HEK293T (cell line): ENCODE measurements at regions of chr20 and their contacts with region 1.

Region 1: DNA sequence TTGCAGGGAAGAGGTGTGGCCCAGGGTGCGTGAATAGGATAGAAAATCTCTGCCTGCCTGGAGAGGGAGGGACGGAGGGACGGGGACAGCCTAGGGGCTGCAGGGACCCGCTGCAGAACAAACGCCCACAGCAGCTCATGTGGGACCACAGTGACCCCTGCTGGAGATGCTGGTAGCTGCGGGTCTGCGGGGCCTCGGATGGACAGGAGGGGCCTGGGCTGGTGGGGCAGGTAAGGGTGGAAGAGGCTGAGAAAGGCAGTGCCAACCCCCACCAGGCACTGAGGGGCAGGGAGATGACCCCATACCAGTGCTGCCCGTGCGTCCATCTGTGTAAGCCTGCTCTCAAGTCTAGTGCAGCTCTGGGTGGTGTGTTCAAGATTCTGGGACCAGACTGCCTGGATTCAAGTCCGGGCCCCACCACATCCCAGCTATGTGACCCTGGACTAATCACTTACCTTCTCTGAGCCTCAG is 39.4 kb downstream of the KIAA1755 start:
- DNase-seq: peak; percentile 90

Region 2: DNA sequence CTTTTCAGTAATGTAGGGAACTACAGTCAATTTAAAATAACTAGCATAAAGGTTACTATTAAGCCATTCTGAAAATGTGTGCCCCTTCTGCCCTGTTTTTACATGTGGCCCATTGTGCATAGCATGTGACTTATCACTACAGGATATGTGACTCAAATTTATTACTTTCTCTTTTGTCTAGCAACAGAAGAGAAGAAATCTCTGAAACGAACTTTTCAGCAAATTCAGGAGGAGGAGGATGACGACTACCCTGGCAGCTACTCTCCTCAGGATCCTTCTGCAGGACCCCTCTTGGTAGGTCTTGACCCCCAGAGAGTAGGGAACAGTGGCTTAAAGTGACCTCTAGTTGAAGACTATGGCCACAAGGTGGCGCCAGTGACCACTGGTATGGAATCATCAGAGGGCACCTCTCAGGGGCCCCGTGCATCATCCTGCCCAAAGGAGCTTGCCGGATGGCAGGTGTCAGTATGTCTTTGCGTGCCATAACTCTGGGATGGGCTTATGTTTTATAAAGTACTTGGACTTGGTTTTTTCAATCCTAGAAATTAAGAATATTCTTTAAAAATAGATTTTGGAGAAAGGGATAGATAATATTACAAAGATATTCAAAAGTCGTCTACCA is 163.7 kb before region 1 on chr20:
- CTCF ChIA-PET with region 1: interaction called, 14 read pairs
- POLR2A ChIA-PET with region 1: no interaction called
- DNase-seq: peak; percentile 80

Region 3: GRCh38 chr20:38073307-38074071 is 147.7 kb before region 1 on chr20:
- CTCF ChIA-PET with region 1: interaction called, 15 read pairs
- POLR2A ChIA-PET with region 1: no interaction called
- DNase-seq: peak; percentile 60

Region 4: DNA sequence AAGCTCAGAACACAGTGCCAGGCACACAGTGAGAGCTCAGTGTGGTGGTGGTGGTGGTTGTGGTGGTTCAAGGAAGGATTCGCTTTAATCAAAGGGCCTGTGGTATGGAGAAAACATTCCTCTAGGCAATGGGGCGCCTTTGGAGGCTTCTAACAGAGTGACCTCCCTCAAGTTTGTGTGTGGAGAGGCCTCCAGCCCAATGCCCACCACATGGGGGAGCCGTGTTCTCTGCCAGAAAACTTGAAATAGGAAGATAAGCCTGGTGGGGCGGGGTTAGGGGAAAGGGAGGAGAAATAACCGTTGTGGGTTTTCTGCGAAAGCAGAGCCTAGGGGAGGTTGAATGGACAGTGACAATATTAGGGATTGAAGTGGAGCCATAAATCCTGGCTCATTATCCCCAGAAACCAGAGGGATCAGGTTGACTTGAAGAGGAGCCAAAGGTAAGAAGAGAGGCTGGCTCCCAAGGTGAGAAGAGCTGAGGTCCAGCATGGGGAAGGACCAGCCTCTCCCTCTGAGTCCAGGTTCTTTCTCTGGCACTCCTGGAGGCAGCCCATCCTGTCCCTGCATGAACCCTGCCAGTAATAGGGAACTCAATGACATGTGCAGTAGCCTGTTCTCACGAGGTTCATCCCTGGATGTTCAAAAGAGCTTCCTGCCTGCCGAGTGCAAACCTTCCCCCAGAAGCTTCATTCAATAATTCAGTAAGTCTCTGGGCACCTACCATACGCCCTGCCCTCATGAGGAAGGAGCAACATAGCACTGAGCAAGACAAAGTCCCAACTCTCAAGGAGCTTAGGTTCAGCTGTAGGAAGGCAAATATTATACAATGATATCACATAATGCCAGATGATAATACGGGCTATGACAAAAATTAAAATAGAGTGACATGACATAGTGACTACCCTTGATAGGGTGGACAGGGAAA is 107.5 kb before region 1 on chr20:
- CTCF ChIA-PET with region 1: interaction called, 17 read pairs
- POLR2A ChIA-PET with region 1: no interaction called
- DNase-seq: peak; percentile 35